ENCODE measurements at regions of chr10 and their contacts with region 1.

Region 1: GRCh38 chr10:59362144-59362958 is at the start of gene FAM13C:
- DNase-seq: peak; percentile 58 to 86
- ATAC-seq: peak; percentile 83
- H3K4me3 ChIP-seq: peak within 1 kb of the TSS; percentile 55 to 69
- H3K27ac ChIP-seq: peak within 1 kb of the TSS in 1 of 2 donors; percentile 2
- H3K4me1 ChIP-seq: peaks cover 0 to 3% of the 10 kb centered on the region in 2 donors
- H3K27me3 ChIP-seq: no peaks in the 10 kb centered on the region
- total RNA-seq, gene FAM13C: 8.1 to 49.7 TPM

Region 2: DNA sequence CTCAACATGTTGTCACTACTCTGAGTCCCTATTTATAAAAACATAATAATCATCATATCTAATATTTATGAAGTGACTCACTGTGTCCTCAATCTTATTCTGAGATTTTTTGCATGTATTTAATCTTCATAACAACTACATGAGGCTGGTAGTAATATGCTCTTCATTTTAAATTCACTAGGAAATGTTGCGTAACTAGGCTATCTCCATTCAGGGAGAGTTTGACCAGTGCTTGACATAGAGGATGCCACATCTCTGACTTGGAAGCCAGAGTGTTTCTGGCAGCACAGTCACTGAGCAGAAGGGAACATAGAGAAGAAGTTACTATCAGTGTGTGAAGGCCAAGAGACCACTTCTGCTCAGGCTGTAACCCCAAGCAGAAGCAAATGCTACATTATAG is 88.9 kb before region 1 on chr10:
- intact Hi-C with region 1: loop called in 1 of 2 experiments (anchors 10 kb)
- DNase-seq: no peak
- ATAC-seq: no peak
- H3K4me3 ChIP-seq: no peak overlapping the region
- H3K27ac ChIP-seq: no peak overlapping the region
- H3K4me1 ChIP-seq: peaks cover 0 to 4% of the 10 kb centered on the region in 2 donors
- H3K27me3 ChIP-seq: no peaks in the 10 kb centered on the region

Region 3: GRCh38 chr10:59465088-59465487 is 102.7 kb after region 1 on chr10:
- intact Hi-C with region 1: loop called in 1 of 2 experiments (anchors 10 kb)
- DNase-seq: no peak
- ATAC-seq: no peak
- H3K4me3 ChIP-seq: no peak overlapping the region
- H3K27ac ChIP-seq: no peak overlapping the region
- H3K4me1 ChIP-seq: no peaks in the 10 kb centered on the region
- H3K27me3 ChIP-seq: no peaks in the 10 kb centered on the region